Endothelial cell of umbilical vein (primary cell): ENCODE measurements at regions of chr3 and their contacts with region 1.

Region 1: DNA sequence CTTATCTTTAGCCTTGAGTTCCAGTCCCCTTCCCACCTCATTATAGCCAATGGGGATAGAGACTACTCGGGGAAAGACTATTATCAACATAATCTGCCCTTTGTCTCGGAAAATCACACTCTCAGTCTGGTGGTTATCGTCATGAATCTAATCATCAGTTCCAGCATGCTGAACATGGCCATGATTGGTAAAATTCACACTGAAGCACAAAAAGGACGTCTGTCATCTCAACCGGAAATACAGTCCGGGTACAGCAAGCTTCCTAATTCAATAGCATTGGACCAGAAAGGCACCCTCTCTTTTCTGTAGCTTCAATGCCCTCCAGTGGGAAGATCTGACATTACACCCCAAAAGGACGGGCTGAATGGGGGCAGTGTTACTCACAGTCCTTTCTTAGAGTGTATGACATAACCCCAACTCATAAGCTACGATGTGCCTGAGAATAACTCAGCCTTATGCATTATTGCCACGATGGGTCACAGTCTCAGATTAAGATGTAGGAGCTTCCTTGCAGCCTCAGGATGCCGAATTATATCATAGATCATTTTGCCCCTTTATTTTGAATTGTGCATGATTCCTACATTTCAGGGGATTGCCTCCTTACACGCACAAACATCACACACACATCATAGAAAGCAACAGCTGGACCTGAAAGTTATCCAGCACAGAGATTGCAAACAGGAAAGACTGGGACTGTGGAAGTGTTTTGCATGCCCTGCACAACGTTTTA is 390.4 kb upstream of the LMCD1 start:
- DNase-seq: peak; percentile 91
- H3K4me3 ChIP-seq: peak overlapping the region in 2 of 3 experiments; percentile 31 to 43
- H3K27ac ChIP-seq: peak overlapping the region; percentile 37
- H3K4me1 ChIP-seq: peaks cover 6% of the 10 kb centered on the region
- H3K27me3 ChIP-seq: no peaks in the 10 kb centered on the region
- CTCF ChIP-seq: peak; percentile 67 to 82
- POLR2A ChIP-seq: no peak

Region 2: GRCh38 chr3:6791161-6791560 is 1320.1 kb before region 1 on chr3:
- CTCF ChIA-PET with region 1: no interaction called
- POLR2A ChIA-PET with region 1: no interaction called
- dilution Hi-C with region 1: no loop called
- intact Hi-C with region 1: loop called (anchors 2 kb)
- DNase-seq: peak; percentile 17
- H3K4me3 ChIP-seq: no peak overlapping the region
- H3K27ac ChIP-seq: no peak overlapping the region
- H3K4me1 ChIP-seq: no peaks in the 10 kb centered on the region
- H3K27me3 ChIP-seq: no peaks in the 10 kb centered on the region
- CTCF ChIP-seq: no peak
- POLR2A ChIP-seq: no peak

Region 3: GRCh38 chr3:7144696-7145308 is 966.4 kb before region 1 on chr3:
- CTCF ChIA-PET with region 1: interaction called, 5 read pairs
- POLR2A ChIA-PET with region 1: no interaction called
- dilution Hi-C with region 1: no loop called
- intact Hi-C with region 1: loop called (anchors 1 kb)
- DNase-seq: peak; percentile 36
- H3K4me3 ChIP-seq: no peak overlapping the region
- H3K27ac ChIP-seq: no peak overlapping the region
- H3K4me1 ChIP-seq: no peaks in the 10 kb centered on the region
- H3K27me3 ChIP-seq: no peaks in the 10 kb centered on the region
- CTCF ChIP-seq: peak; percentile 63 to 68
- POLR2A ChIP-seq: no peak

Region 4: DNA sequence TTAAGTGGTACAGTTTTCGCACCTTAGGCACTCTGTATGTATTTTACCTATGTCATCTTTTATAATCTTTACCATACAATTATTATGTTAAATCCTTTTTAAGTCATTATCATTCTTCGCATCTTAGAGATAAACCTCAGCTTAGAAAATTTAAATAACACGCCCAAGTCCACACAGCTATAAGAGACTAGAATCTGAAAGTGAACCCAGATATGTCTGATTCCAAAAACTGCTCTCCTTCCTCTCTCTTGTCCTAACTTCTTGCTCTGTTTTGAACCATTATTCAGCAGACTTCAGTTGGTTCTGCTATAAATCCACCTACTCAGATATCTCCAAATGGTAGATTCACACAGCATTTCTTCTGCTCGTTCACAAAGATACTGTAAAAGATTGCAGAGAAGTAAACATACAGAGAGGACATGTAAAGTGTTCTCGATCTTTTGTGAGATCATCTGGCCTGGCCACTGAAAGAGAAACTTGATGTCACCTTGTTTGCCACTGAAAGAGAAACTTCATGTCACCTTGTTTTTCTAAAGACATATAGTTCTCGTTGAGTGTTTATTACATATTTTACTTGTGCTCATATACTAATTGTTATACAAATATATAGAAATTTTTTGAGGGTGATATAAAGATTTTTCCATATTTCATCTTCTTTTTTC is 717.2 kb before region 1 on chr3:
- CTCF ChIA-PET with region 1: interaction called, 3 read pairs
- POLR2A ChIA-PET with region 1: no interaction called
- dilution Hi-C with region 1: no loop called
- intact Hi-C with region 1: loop called (anchors 1 kb)
- DNase-seq: no peak
- H3K4me3 ChIP-seq: no peak overlapping the region
- H3K27ac ChIP-seq: no peak overlapping the region
- H3K4me1 ChIP-seq: no peaks in the 10 kb centered on the region
- H3K27me3 ChIP-seq: no peaks in the 10 kb centered on the region
- CTCF ChIP-seq: no peak
- POLR2A ChIP-seq: no peak

Region 5: GRCh38 chr3:7734456-7734855 is 376.8 kb before region 1 on chr3:
- CTCF ChIA-PET with region 1: no interaction called
- POLR2A ChIA-PET with region 1: no interaction called
- dilution Hi-C with region 1: no loop called
- intact Hi-C with region 1: loop called (anchors 1 kb)
- DNase-seq: peak; percentile 71
- H3K4me3 ChIP-seq: no peak overlapping the region
- H3K27ac ChIP-seq: peak overlapping the region; percentile 85
- H3K4me1 ChIP-seq: peaks cover 33% of the 10 kb centered on the region
- H3K27me3 ChIP-seq: no peaks in the 10 kb centered on the region
- CTCF ChIP-seq: no peak
- POLR2A ChIP-seq: no peak

Region 6: DNA sequence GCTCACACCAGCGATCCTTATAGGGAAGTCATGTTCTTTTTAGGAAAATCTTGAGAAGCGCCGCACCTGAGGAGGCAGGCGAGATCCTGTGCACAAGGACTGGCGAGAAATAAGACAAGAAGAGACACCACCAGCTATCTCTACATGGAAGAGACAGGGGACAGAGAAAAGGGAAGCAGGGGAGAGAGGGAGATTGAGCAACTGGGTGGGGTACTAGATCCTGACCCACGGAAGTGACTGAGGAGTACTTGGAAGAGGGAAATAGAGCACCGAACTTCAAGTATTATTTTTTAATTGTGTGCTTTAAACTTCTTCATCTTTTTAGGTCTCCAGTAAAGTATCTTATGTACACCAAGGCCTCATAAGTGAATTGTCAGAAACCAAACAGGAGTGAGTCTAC is 351.6 kb before region 1 on chr3:
- CTCF ChIA-PET with region 1: no interaction called
- POLR2A ChIA-PET with region 1: no interaction called
- dilution Hi-C with region 1: no loop called
- intact Hi-C with region 1: no loop called
- DNase-seq: no peak
- H3K4me3 ChIP-seq: no peak overlapping the region
- H3K27ac ChIP-seq: no peak overlapping the region
- H3K4me1 ChIP-seq: no peaks in the 10 kb centered on the region
- H3K27me3 ChIP-seq: no peaks in the 10 kb centered on the region
- CTCF ChIP-seq: no peak
- POLR2A ChIP-seq: no peak

Region 7: GRCh38 chr3:8416965-8417364 is 305.7 kb after region 1 on chr3:
- CTCF ChIA-PET with region 1: interaction called, 5 read pairs
- POLR2A ChIA-PET with region 1: no interaction called
- dilution Hi-C with region 1: no loop called
- intact Hi-C with region 1: loop called (anchors 5 kb)
- DNase-seq: peak; percentile 39
- H3K4me3 ChIP-seq: no peak overlapping the region
- H3K27ac ChIP-seq: no peak overlapping the region
- H3K4me1 ChIP-seq: no peaks in the 10 kb centered on the region
- H3K27me3 ChIP-seq: no peaks in the 10 kb centered on the region
- CTCF ChIP-seq: no peak
- POLR2A ChIP-seq: no peak